ENCODE measurements at regions of chr11 and their contacts with region 1.

Region 1: GRCh38 chr11:114208377-114208776 is 87.8 kb upstream of the NNMT start:
- DNase-seq: no peak
- ATAC-seq: no peak
- H3K4me3 ChIP-seq: no peak overlapping the region
- H3K27ac ChIP-seq: peak overlapping the region in 1 of 10 donors; percentile 21
- H3K4me1 ChIP-seq: peaks cover 0 to 47% (median 33%) of the 10 kb centered on the region in 9 donors
- H3K27me3 ChIP-seq: no peaks in the 10 kb centered on the region
- CTCF ChIP-seq: no peak

Region 2: DNA sequence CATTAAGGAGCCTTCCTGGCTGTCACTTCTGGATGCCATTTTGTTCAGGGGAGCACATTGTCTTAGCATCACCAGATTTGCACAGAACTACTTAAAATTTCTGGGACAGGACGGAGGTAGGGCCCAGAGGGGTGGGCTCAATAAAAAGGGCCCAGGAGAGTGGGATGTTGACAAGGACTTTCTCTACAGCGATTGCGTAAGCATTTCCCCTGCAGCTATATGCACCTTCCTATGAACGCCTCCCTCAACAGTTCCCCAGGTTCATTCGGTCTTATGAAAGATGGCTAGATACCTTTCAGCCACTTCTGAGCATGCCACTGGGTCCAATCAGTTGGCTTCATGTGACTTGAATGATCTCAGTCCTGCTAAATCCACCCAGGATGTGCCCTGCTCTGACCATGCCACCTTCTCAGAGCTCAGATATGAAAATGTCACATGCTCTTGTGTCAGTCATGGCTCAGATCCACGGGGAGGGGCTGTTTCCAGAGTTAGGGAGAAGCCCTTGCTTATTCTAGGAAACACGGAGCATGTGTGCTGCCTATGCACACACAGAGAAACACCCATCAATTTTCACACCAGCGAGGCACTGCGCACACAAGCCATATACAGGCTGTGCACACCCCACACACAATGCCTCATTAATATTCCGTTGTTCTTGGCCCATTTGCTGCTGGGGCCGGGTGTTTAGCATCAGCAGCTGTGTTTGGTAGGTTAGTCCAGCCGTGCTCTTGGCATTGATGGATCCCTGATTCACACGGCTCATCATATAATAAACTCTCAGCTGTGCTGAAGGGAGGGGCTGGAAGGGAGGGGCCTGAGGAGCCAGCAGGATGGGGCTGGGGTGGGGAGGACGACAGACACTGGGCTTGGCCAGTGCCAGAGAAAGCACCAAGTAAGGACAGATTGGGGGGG is 35.3 kb after region 1 on chr11:
- intact Hi-C with region 1: loop called in 3 of 10 experiments (anchors 5 kb)
- DNase-seq: peak in 1 of 2 donors; percentile 80
- ATAC-seq: peak; percentile 68 to 94 (median 73)
- H3K4me3 ChIP-seq: no peak overlapping the region
- H3K27ac ChIP-seq: peak overlapping the region in 9 of 10 donors; percentile 2 to 79 (median 55)
- H3K4me1 ChIP-seq: peaks cover 11 to 62% (median 37%) of the 10 kb centered on the region in 9 donors
- H3K27me3 ChIP-seq: no peaks in the 10 kb centered on the region
- CTCF ChIP-seq: no peak